ENCODE measurements at regions of chr17 and their contacts with region 1.

Region 1: DNA sequence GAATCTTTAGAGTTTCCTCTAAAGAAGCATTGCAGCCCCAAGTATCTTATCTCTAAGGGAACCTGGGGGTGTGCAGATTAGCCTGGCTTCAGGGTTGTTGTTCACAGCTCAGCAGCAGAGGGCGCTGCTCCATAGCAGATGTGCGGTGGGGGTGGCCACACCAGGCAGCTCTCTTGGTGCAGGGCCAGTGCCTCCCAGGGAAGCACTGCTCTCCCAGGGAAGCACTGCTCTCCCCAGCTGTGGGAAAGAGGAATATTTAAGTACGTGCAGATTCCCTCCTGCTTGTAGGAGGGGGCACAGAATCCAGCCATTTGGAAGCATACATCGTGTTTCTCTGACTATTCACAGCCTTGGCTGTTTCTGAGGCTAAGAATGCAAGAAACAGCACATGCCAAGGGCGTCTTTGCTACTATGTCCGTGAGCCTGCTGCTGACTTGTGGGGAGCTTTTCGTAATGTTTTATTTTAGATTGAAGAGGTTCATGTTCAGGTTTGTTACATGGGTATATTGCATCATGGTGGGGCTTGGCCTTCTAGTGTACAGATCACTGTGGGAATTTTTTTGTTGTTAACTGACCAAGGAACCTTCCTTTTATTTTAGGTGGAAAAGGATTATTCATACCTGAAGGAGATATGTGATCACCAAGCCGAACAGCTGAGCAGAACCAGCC is 217.8 kb downstream of the SPECC1 start:
- DNase-seq: peak; percentile 70 to 83 (median 80)
- H3K4me3 ChIP-seq: no peak overlapping the region
- H3K27ac ChIP-seq: no peak overlapping the region
- H3K4me1 ChIP-seq: peaks cover 0 to 5% (median 0%) of the 10 kb centered on the region in 4 experiments
- H3K27me3 ChIP-seq: no peaks in the 10 kb centered on the region

Region 2: DNA sequence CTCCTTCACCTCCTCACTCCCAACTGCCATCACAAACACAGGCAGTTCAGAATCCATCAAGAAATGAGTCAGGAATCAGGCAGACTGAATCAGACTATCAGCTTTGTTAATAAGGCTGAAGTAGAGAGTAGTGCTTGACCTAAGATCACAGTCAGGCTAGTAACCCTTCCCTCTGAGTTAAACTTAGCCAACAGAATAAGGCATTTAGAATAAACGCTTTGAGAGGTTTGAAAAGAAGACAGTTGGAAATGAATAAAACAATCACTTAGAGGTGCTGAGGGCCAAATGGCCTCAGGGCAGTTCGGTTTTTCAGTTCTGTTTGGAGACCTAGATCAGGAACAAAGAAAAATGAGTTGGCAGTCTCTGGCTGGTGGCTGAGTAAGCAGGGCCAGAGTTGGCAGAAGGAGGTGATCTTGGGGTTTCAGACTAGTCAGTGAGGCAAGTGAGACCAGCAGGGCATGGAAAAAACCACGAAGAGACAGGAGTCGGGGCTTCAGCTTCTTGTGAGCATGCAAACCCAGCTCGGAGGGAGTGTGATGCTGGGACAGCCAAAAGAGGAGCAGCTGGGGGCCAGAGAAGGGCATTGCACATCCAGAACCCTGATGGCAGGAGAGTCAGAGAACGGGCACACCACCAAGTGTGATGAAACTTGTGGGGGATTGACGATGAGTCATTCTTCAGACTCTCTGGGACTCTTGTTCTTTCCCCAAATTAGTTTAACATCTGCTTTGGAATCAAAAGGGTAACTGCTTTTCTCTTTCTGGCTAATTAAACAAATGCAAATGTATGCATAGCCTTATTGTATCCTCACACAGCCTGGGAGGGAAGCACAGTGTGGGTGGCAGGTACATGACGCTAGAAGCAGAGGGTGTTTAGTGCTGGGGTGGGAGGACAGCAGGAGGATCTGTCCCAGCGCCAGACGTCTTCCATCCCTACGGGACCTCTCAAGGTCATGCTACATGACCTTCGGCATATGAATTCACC is 163.0 kb before region 1 on chr17:
- CTCF ChIA-PET with region 1: no interaction called
- POLR2A ChIA-PET with region 1: no interaction called
- DNase-seq: peak; percentile 41 to 79 (median 75)
- H3K4me3 ChIP-seq: no peak overlapping the region
- H3K27ac ChIP-seq: no peak overlapping the region
- H3K4me1 ChIP-seq: peaks cover 0 to 24% (median 6%) of the 10 kb centered on the region in 4 experiments
- H3K27me3 ChIP-seq: no peaks in the 10 kb centered on the region

Region 3: DNA sequence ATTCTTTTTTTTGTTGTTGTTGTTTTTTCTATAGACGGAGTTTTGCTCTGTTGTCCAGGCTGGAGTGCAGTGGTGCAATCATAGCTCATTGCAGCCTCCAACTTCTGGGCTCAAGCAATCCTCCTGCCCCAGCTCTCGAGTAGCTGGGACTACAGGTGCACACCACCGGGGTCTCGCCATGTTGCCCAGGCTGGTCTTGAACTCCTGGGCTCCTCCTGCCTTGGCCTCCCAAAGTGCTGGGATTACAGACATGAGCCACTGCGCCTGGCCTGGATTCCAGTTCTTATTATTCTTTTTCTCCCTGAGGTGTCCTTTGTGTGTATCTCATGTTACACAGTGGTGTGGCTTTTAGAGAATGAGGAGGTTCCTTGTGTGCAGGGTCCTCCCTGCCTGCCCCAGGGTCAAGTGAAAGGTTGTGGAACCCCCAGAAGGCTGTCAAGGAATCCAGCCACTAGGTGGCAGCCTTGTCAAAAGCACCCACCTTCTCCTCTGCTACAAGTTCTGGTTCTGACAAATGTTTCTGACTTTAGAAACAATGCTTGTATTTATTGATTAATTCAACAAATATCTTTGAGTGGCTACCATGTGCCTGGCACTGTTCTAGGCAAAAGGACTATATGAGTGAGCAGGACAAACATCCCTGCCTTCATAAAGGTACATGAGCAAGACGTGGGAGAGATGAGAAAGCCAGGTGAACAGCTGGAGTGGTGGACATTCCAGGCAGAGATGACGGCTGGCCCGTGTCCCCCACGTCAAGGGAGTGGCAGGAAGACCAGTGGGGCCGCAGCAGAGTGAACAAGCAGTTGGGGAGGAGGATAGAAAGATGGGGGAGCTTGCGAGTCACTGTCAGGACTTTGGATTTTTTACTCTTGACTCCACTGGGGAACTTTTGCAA is 105.3 kb before region 1 on chr17:
- CTCF ChIA-PET with region 1: interaction called, 27 read pairs
- POLR2A ChIA-PET with region 1: no interaction called
- DNase-seq: peak; percentile 63 to 72 (median 63)
- H3K4me3 ChIP-seq: no peak overlapping the region
- H3K27ac ChIP-seq: no peak overlapping the region
- H3K4me1 ChIP-seq: no peaks in the 10 kb centered on the region
- H3K27me3 ChIP-seq: no peaks in the 10 kb centered on the region

Region 4: DNA sequence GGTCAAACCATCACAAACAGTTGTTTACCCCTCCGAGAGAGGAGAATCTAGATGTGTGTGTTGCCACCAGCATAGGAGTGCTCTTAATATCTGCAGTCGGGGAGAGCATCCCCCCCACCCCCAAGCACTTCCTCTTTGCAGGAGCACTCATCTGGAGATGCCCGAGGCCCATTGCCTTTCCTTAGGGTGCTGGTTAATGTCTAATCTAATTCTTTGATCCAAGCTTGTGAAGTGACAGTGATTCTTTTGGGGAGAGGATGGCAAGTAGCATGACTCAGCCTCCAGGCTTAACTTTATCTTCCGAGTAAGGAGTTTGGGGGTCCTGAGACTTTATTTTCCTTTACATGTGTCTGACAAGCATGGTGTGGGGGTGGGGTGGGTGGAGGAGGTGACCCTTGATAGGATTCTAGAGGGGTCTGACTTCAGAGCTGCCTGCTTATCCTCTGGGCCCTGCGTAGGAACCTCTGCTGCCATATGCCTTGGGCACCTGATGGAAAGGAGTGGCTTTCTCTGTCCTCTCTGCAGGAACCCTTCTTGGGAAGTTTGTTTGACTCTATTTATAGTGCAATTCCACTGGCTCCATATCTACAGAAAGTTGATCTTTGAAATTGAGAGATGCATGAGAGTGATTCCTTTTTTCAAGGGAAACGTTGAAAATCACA is 10.7 kb before region 1 on chr17:
- CTCF ChIA-PET with region 1: interaction called, 10 read pairs
- POLR2A ChIA-PET with region 1: no interaction called
- DNase-seq: peak in 1 of 3 donors; percentile 4
- H3K4me3 ChIP-seq: no peak overlapping the region
- H3K27ac ChIP-seq: no peak overlapping the region
- H3K4me1 ChIP-seq: no peaks in the 10 kb centered on the region
- H3K27me3 ChIP-seq: no peaks in the 10 kb centered on the region

Region 5: DNA sequence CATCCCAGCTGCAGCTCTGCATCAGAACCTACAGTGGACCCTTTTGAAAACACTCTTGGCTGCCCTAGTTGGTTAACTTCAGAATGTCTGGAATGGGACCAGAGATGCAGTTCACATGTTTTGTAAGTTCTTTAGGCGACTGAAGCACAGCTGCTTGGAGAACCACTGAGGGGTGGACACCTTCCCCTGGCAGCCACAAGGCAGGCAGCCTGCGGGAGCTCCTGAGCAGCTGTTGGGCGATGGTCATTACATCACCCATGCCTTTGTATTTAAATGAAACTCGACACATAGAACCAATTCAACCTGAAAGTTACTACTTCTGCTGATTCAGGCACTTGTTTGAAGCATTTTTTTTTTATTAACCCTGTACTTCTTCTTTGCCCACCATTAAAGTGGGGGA is 88.9 kb after region 1 on chr17:
- CTCF ChIA-PET with region 1: interaction called, 16 read pairs
- POLR2A ChIA-PET with region 1: no interaction called
- DNase-seq: no peak
- H3K4me3 ChIP-seq: no peak overlapping the region
- H3K27ac ChIP-seq: no peak overlapping the region
- H3K4me1 ChIP-seq: peaks cover 0 to under 1% (median 0%) of the 10 kb centered on the region in 4 experiments
- H3K27me3 ChIP-seq: no peaks in the 10 kb centered on the region